ENCODE measurements at regions of chr11 and their contacts with region 1.

Region 1: GRCh38 chr11:34438529-34439507 is at the start of gene CAT:
- DNase-seq: peak; percentile 96
- ATAC-seq: peak; percentile 92
- H3K4me3 ChIP-seq: peak within 1 kb of the TSS; percentile 82 to 98 (median 88)
- H3K4me3 Mint-ChIP-seq: peak within 1 kb of the TSS; percentile 99
- H3K27ac ChIP-seq: peak within 1 kb of the TSS; percentile 75 to 85
- H3K27ac Mint-ChIP-seq: peak within 1 kb of the TSS; percentile 98
- H3K4me1 ChIP-seq: peaks cover 27 to 39% of the 10 kb centered on the region in 2 donors
- H3K4me1 Mint-ChIP-seq: peaks cover 44% of the 10 kb centered on the region
- H3K27me3 ChIP-seq: no peaks in the 10 kb centered on the region
- H3K27me3 Mint-ChIP-seq: no peaks in the 10 kb centered on the region
- CTCF ChIP-seq: no peak
- total RNA-seq, gene CAT: 83.2 and 88.8 TPM in 2 replicates

Region 2: GRCh38 chr11:33773987-33774735 is 664.7 kb before region 1 on chr11 and contains the start of gene FBXO3:
- CTCF ChIA-PET with region 1: no interaction called
- POLR2A ChIA-PET with region 1: no interaction called
- intact Hi-C with region 1: loop called (anchors 5 kb)
- DNase-seq: peak; percentile 90
- ATAC-seq: peak; percentile 94
- H3K4me3 ChIP-seq: peak within 1 kb of the TSS; percentile 66 to 91 (median 86)
- H3K4me3 Mint-ChIP-seq: peak within 1 kb of the TSS; percentile 92
- H3K27ac ChIP-seq: peak within 1 kb of the TSS; percentile 57 to 82
- H3K27ac Mint-ChIP-seq: peak within 1 kb of the TSS; percentile 95
- H3K4me1 ChIP-seq: peaks cover 21 to 24% of the 10 kb centered on the region in 2 donors
- H3K4me1 Mint-ChIP-seq: peaks cover 40% of the 10 kb centered on the region
- H3K27me3 ChIP-seq: peaks cover 0 to 22% (median 9%) of the 10 kb centered on the region in 4 experiments
- H3K27me3 Mint-ChIP-seq: peaks cover 19% of the 10 kb centered on the region
- CTCF ChIP-seq: no peak
- total RNA-seq, gene FBXO3: 32.7 and 34.3 TPM in 2 replicates

Region 3: GRCh38 chr11:34105079-34105956 is 333.5 kb before region 1 on chr11 and contains the start of gene NAT10:
- CTCF ChIA-PET with region 1: no interaction called
- POLR2A ChIA-PET with region 1: no interaction called
- intact Hi-C with region 1: loop called (anchors 1 kb)
- DNase-seq: peak; percentile 99
- ATAC-seq: peak; percentile 91
- H3K4me3 ChIP-seq: peak within 1 kb of the TSS; percentile 70 to 99 (median 93)
- H3K4me3 Mint-ChIP-seq: peak within 1 kb of the TSS; percentile 97
- H3K27ac ChIP-seq: peak within 1 kb of the TSS; percentile 95 to 96
- H3K27ac Mint-ChIP-seq: peak within 1 kb of the TSS; percentile 100
- H3K4me1 ChIP-seq: peaks cover 24 to 28% of the 10 kb centered on the region in 2 donors
- H3K4me1 Mint-ChIP-seq: peaks cover 47% of the 10 kb centered on the region
- H3K27me3 ChIP-seq: no peaks in the 10 kb centered on the region
- H3K27me3 Mint-ChIP-seq: no peaks in the 10 kb centered on the region
- CTCF ChIP-seq: no peak
- total RNA-seq, gene NAT10: 73.5 and 74.5 TPM in 2 replicates

Region 4: DNA sequence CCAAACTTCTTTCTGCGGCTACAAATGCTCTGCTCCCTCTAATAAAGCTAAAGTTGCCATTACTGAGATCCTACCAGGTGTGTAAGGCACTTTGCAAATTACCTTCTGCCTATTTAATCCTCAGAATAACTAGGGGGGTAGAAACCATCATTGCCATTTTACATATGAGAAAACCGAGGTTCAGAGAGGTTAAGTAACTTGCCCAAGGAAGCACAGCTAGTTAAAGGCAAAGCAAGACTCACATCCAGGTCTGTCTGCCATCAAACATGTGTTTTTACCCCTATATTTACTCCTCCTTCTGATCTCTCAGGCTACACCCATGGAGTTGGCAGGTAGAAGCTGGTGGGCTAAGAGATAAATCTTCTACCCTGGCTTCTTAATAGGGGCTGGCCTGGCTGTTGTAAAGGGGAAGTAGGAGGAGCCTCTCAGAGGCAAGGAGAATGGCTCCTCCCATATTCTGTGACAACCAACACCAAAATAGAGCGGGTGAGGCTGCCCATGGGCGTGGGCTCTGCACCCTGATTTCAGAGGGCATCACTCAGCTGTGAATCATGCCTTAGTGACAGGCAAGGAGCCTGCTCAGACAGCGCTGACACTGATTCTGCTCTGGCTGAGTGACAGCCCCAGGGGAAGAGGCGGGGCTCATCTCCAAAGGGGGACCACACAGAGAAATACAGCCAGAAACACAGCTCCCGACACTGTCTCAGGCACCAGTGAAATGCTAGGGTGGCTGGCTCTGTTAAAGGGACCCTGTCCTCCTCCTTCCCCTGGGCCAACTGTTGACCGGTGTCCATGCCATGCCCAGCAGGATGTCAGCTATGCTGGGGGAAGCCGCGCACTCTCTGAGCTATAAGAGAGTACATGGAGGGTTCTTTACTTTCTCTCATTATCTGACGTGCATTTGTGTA is 187.8 kb before region 1 on chr11:
- CTCF ChIA-PET with region 1: no interaction called
- POLR2A ChIA-PET with region 1: no interaction called
- intact Hi-C with region 1: loop called (anchors 2 kb)
- DNase-seq: peak; percentile 93
- ATAC-seq: peak; percentile 99
- H3K4me3 ChIP-seq: peak overlapping the region in 4 of 5 experiments; percentile 13 to 59 (median 46)
- H3K4me3 Mint-ChIP-seq: peak overlapping the region; percentile 47
- H3K27ac ChIP-seq: peak overlapping the region; percentile 67 to 76
- H3K27ac Mint-ChIP-seq: peak overlapping the region; percentile 72
- H3K4me1 ChIP-seq: peaks cover 19 to 26% of the 10 kb centered on the region in 2 donors
- H3K4me1 Mint-ChIP-seq: peaks cover 36% of the 10 kb centered on the region
- H3K27me3 ChIP-seq: no peaks in the 10 kb centered on the region
- H3K27me3 Mint-ChIP-seq: no peaks in the 10 kb centered on the region
- CTCF ChIP-seq: no peak

Region 5: GRCh38 chr11:34480314-34480713 is 41.5 kb after region 1 on chr11:
- CTCF ChIA-PET with region 1: no interaction called
- POLR2A ChIA-PET with region 1: no interaction called
- intact Hi-C with region 1: no loop called
- DNase-seq: no peak
- ATAC-seq: no peak
- H3K4me3 ChIP-seq: no peak overlapping the region
- H3K4me3 Mint-ChIP-seq: no peak overlapping the region
- H3K27ac ChIP-seq: no peak overlapping the region
- H3K27ac Mint-ChIP-seq: no peak overlapping the region
- H3K4me1 ChIP-seq: no peaks in the 10 kb centered on the region
- H3K4me1 Mint-ChIP-seq: no peaks in the 10 kb centered on the region
- H3K27me3 ChIP-seq: no peaks in the 10 kb centered on the region
- H3K27me3 Mint-ChIP-seq: peaks cover 6% of the 10 kb centered on the region
- CTCF ChIP-seq: no peak

Region 6: DNA sequence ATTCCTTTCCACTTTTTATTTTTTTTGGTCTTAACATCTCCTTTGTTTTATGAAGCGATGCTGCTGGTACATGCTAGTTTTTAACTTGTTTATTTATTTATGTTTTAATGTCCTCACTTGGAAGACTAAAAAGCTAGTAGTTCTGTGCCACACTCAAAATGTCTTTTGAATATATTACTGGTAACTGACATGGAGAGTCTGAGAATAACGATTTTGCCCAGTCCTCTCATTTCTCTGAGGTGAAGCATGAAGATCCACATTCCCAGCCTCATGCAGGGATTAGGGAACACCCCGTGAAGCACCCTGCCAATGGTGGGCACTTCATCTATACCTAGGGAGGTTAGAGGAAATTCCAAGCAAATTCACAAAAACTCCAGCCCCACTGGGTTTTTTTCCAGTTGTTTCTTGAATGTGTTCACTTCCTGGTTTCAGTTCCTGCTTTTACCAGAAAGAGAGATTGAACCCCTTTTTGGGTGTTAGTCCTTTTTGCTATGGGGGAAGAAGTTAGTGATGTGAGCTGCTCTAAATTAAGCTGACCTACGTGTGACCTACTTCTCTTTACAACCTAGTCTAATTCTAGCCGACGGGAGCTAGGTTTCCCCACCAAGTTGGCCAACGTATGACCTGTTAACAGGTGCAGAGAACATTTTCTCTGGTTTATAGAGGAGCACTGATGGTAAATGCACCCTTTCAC is 874.4 kb after region 1 on chr11:
- CTCF ChIA-PET with region 1: no interaction called
- POLR2A ChIA-PET with region 1: no interaction called
- intact Hi-C with region 1: loop called (anchors 5 kb)
- DNase-seq: peak; percentile 84
- ATAC-seq: peak; percentile 91
- H3K4me3 ChIP-seq: peak overlapping the region in 2 of 5 experiments; percentile 20 to 42
- H3K4me3 Mint-ChIP-seq: peak overlapping the region; percentile 63
- H3K27ac ChIP-seq: peak overlapping the region; percentile 92 to 93
- H3K27ac Mint-ChIP-seq: peak overlapping the region; percentile 86
- H3K4me1 ChIP-seq: peaks cover 43 to 61% of the 10 kb centered on the region in 2 donors
- H3K4me1 Mint-ChIP-seq: peaks cover 56% of the 10 kb centered on the region
- H3K27me3 ChIP-seq: no peaks in the 10 kb centered on the region
- H3K27me3 Mint-ChIP-seq: no peaks in the 10 kb centered on the region
- CTCF ChIP-seq: no peak

Measured in B cell (primary cell).